GM12878 (cell line): ENCODE measurements at regions of chr11 and their contacts with region 1.

Region 1: GRCh38 chr11:3341298-3341697 is 37.6 kb downstream of the ZNF195 start:
- DNase-seq: no peak
- ATAC-seq: peak; percentile 76
- H3K4me3 ChIP-seq: no peak overlapping the region
- H3K27ac ChIP-seq: no peak overlapping the region
- H3K4me1 ChIP-seq: no peaks in the 10 kb centered on the region
- H3K27me3 ChIP-seq: no peaks in the 10 kb centered on the region
- CTCF ChIP-seq: peak; percentile 73 to 80 (median 75)
- EP300 ChIP-seq: no peak
- POLR2A ChIP-seq: no peak
- RAD21 ChIP-seq: peak; percentile 87

Region 2: GRCh38 chr11:3359092-3359824 is 18.0 kb after region 1 on chr11:
- CTCF ChIA-PET with region 1: interaction called, 14 read pairs
- POLR2A ChIA-PET with region 1: no interaction called
- RAD21 ChIA-PET with region 1: interaction called, 3 read pairs
- SMC1A ChIA-PET with region 1: no interaction called
- in situ Hi-C with region 1: no loop called
- intact Hi-C with region 1: no loop called
- DNase-seq: no peak
- ATAC-seq: no peak; the same call in 2 of the 3 replicates
- H3K4me3 ChIP-seq: no peak overlapping the region
- H3K27ac ChIP-seq: no peak overlapping the region
- H3K4me1 ChIP-seq: no peaks in the 10 kb centered on the region
- H3K27me3 ChIP-seq: no peaks in the 10 kb centered on the region
- CTCF ChIP-seq: no peak
- EP300 ChIP-seq: no peak
- POLR2A ChIP-seq: no peak
- RAD21 ChIP-seq: no peak

Region 3: GRCh38 chr11:3378426-3379423 is 37.4 kb after region 1 on chr11 and contains the start of gene ZNF195:
- CTCF ChIA-PET with region 1: interaction called, 14 read pairs
- POLR2A ChIA-PET with region 1: no interaction called
- RAD21 ChIA-PET with region 1: interaction called, 4 read pairs
- SMC1A ChIA-PET with region 1: interaction called, 16 read pairs
- in situ Hi-C with region 1: no loop called
- intact Hi-C with region 1: no loop called
- DNase-seq: peak; percentile 94
- ATAC-seq: peak; percentile 99
- H3K4me3 ChIP-seq: peak within 1 kb of the TSS; percentile 81
- H3K27ac ChIP-seq: peak within 1 kb of the TSS; percentile 88
- H3K4me1 ChIP-seq: 0 out of 2 replicates have a peak, but pooled peaks cover 9% of the 10 kb centered on the region
- H3K27me3 ChIP-seq: no peaks in the 10 kb centered on the region
- CTCF ChIP-seq: no peak
- EP300 ChIP-seq: 0 out of 4 replicates have a peak, but pooled peaks of 1 of the 2 experiments have one; percentile 21
- POLR2A ChIP-seq: peak; percentile 92
- RAD21 ChIP-seq: no peak
- polyA plus RNA-seq, gene ZNF195: 37.3 to 41.6 TPM